Activated naive CD4-positive, alpha-beta T cell treated with anti-CD3 and anti-CD28 coated beads for 36 hours (primary cell): ENCODE measurements at regions of chr14 and their contacts with region 1.

Region 1: GRCh38 chr14:91396959-91397815 is 20.4 kb downstream of the CCDC88C start:
- DNase-seq: peak; percentile 88
- H3K4me3 Mint-ChIP-seq: peak overlapping the region; percentile 64
- H3K27ac Mint-ChIP-seq: peak overlapping the region; percentile 87
- H3K4me1 Mint-ChIP-seq: peaks cover 92% of the 10 kb centered on the region
- H3K27me3 Mint-ChIP-seq: no peaks in the 10 kb centered on the region

Region 2: GRCh38 chr14:91410771-91411536 is 13.8 kb after region 1 on chr14:
- CTCF ChIA-PET with region 1: interaction called, 94 read pairs
- intact Hi-C with region 1: loop called (anchors 1 kb)
- DNase-seq: peak; percentile 62
- H3K4me3 Mint-ChIP-seq: peak overlapping the region; percentile 53
- H3K27ac Mint-ChIP-seq: peak overlapping the region; percentile 95
- H3K4me1 Mint-ChIP-seq: peaks cover 91% of the 10 kb centered on the region
- H3K27me3 Mint-ChIP-seq: no peaks in the 10 kb centered on the region